ENCODE measurements at regions of chr14 and their contacts with region 1.

Region 1: GRCh38 chr14:52906071-52906601 is 44.7 kb downstream of the FERMT2 start:
- DNase-seq: peak in 1 of 2 experiments; percentile 61
- ATAC-seq: peak; percentile 74 to 77
- H3K4me3 ChIP-seq: 0 out of 3 replicates have a peak overlapping the region, but pooled peaks have one; percentile 16
- H3K27ac ChIP-seq: peak overlapping the region; percentile 80 to 93
- H3K4me1 ChIP-seq: peaks cover 73% of the 10 kb centered on the region
- CTCF ChIP-seq: no peak
- EP300 ChIP-seq: peak in 1 of 2 experiments; percentile 30; a peak in 2 of 5 replicates
- POLR2A ChIP-seq: no peak
- RAD21 ChIP-seq: no peak

Region 2: GRCh38 chr14:53022593-53022992 is 116.5 kb after region 1 on chr14:
- CTCF ChIA-PET with region 1: no interaction called
- POLR2A ChIA-PET with region 1: interaction called, 10 read pairs
- DNase-seq: no peak
- ATAC-seq: no peak
- H3K4me3 ChIP-seq: no peak overlapping the region
- H3K27ac ChIP-seq: no peak overlapping the region
- H3K4me1 ChIP-seq: no peaks in the 10 kb centered on the region
- CTCF ChIP-seq: no peak
- EP300 ChIP-seq: no peak
- POLR2A ChIP-seq: no peak
- RAD21 ChIP-seq: no peak